HAP-1 (cell line): ENCODE measurements at regions of chr1 and their contacts with region 1.

Region 1: DNA sequence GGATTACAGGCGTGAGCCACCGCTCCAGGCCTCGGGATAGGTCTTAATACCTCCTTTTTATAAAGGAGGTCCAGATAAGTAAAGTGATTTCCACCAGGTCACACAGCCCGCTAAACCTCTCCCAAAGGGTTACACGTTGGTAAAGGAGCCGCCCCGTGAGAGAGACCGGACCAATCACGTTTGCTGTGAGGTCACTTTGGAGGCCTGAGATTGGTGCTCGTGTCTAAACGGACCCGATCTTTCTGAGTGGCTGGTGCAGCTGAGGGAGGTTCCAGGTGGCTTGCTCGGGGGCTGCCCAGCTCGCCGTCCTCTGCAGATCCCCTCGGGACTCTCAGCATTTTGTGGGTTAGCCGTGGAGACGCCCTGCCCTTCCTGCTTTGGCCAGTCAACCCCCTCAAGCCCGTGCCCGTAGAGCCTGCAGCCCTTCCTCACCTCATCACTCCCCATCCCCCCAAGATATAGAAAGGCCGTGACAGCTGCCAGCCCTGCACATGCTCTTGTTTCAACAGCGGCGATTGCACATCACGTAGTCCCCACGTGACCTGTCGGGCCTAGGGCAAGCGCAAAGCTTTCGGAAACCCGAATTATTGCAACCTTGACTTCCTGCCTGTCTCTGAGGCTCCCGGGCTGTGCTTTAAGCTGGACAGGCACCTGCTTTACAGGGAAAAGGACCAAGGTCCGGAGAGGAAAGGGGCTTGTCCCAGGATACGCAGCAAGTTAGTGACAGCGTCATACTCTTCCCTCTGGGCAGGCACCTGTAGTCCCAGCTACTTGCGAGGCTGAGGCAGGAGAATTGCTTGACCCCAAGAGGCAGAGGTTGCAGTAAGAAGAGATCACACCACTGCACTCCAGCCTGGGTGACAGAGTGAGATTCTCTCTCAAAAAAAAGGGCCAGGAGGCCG is 5.0 kb upstream of the COA7 start:
- DNase-seq: peak in 1 of 2 experiments; percentile 18
- H3K4me3 ChIP-seq: no peak overlapping the region
- H3K4me1 ChIP-seq: peaks cover 6% of the 10 kb centered on the region
- H3K27me3 ChIP-seq: no peaks in the 10 kb centered on the region

Region 2: GRCh38 chr1:52955129-52955970 is 252.2 kb after region 1 on chr1:
- in situ Hi-C with region 1: no loop called
- DNase-seq: peak; percentile 42 to 74
- H3K4me3 ChIP-seq: no peak overlapping the region
- H3K4me1 ChIP-seq: peaks cover 11% of the 10 kb centered on the region
- H3K27me3 ChIP-seq: no peaks in the 10 kb centered on the region

Region 3: DNA sequence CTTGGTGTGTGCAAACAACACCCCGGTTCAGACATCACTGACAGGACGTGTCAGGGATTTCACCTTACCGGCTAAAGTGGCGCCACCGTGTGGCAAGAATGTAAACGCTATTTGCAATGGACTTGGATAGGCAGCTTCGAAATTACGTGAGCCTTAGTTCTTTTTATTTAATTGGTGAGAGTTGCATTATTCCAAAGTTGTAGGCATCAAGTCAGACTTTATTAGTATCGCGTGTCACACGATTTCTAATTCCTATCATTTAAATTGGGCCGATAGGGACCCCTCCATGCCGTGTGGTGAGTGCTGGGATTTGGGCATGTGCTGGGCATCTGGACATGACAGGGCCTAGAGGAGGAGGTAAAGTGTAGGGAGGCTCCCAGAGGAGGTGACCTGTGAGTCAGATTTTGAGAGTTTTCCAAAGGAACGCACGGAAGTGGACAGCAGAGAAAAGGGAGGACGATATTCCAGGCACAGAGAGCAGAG is 479.0 kb after region 1 on chr1:
- in situ Hi-C with region 1: loop called (anchors 10 kb)
- DNase-seq: peak; percentile 68 to 92
- H3K4me3 ChIP-seq: no peak overlapping the region
- H3K4me1 ChIP-seq: no peaks in the 10 kb centered on the region
- H3K27me3 ChIP-seq: no peaks in the 10 kb centered on the region